ENCODE measurements at regions of chr22 and their contacts with region 1.

Region 1: DNA sequence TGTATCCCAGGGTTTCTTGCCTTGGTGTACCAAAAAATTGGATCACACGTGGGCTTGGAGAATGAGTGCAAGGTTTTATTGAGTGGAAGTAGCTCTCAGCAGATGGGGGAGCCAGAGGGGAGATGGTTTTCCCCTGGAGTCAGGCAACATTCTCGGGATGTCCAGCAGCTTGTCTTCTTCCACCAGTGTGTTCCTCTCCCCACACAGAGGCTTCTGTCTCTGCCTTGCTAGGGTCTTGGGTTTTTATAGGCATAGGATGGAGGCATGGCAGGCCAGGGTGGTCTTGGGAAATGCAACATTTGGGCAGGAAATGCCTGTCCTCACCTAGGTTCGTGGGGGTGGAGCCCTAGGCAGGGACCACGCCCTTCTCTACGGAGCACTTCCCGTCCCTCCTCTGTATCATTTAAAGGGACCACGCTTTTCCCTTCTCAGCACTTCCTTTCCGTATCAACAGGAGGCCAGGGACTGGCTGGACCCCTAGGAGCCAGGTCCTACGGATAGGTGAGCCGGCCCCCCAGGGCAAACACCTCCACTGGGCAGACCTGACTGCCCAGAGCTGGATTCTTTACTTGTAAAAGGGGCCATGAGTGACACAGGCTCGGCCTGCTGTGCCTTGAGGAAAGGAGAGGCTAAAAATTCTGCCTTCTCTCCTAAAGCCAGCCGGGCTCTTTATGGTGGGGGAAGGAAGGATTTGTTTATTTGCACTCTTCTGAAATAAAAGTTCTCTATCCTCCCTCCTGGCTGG is 55.3 kb upstream of the CCDC188 start:
- DNase-seq: peak; percentile 80
- ATAC-seq: peak; percentile 97
- H3K4me3 Mint-ChIP-seq: peak overlapping the region; percentile 82
- H3K27ac Mint-ChIP-seq: peak overlapping the region; percentile 89
- H3K4me1 Mint-ChIP-seq: peaks cover 26% of the 10 kb centered on the region
- H3K27me3 Mint-ChIP-seq: no peaks in the 10 kb centered on the region

Region 2: DNA sequence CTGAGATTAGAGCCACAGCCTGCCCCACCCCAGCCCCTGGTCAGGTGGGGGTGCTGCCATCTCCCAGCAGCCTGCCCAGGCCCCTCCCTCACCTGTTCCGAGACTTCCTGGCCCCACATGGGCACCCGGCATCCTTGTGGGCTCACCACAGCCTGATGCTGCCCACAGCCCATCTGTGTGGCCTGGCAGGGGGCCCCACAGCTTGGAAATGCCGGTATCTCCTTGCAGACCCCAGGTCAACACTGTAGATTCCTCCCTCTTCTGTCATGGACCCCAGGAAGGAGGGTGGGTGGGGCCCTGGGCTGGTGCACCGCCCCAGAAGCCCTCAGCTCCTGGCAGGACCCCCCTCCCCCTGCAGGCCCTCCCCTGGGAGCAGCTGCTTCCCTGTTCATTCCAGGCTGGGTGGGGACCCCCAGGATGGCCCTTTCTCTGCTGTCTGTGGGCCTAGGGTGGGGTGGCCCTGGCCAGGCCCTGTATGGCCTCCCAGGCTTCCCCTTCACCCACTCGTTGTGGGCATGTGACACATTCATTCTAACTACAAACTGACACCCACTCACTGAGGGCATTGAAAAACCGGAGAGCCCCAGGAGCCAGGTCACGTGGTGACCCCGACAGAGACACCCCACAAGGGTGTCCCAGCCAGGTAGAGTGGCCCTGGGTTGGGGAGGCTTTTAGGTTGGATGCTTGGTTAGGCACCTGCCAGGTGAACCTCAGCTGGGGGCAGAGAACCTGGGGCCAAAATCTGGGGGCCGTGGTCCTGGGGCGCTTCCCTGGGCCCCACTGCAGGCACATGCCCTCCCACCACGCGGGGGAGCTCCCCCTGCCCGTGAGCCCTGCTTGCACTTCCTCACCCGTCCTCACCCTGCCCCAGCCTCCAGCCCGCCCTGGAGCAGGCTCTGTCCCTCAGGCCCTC is 11.2 kb before region 1 on chr22:
- CTCF ChIA-PET with region 1: no interaction called
- POLR2A ChIA-PET with region 1: no interaction called
- intact Hi-C with region 1: no loop called
- DNase-seq: no peak
- ATAC-seq: no peak
- H3K4me3 Mint-ChIP-seq: no peak overlapping the region
- H3K27ac Mint-ChIP-seq: no peak overlapping the region
- H3K4me1 Mint-ChIP-seq: no peaks in the 10 kb centered on the region
- H3K27me3 Mint-ChIP-seq: no peaks in the 10 kb centered on the region

Region 3: DNA sequence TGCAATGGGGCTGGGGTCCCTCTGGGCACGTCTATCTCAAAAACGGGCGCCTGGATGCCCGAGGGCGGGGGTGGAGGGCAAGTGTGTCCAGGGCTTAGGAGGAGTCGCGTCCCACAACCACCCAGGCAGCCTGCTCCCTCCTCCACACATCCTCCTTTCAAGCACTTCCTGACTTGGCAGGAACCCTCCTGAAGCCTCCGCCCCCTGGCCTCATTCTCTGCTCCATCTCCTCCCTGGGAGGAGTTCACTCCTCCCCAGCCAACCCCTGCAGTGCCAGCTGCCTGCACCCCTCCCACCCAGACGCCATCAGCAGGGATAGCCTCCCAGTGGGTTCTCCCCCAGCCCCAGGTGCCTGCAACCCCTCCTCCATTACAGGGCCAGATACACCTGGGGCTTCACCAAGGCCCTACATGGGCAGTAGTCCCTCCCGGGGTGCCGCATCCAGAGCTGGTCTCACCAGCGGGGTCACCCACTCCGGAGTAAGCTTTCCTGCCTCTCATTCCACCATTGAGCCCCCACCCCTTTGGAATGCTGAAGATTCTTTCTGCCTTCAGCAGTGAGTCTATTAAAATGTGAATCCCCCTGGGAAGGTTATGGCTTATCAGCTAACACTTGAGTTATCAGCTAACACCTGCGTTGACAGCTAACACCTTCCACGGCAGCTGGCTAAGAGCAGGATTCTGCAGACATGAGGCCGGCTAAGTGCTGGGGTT is 37.6 kb after region 1 on chr22:
- CTCF ChIA-PET with region 1: interaction called, 4 read pairs
- POLR2A ChIA-PET with region 1: no interaction called
- intact Hi-C with region 1: loop called in 1 of 2 experiments (anchors 2 kb)
- DNase-seq: peak; percentile 77
- ATAC-seq: peak; percentile 81
- H3K4me3 Mint-ChIP-seq: peak overlapping the region; percentile 23
- H3K27ac Mint-ChIP-seq: peak overlapping the region; percentile 69
- H3K4me1 Mint-ChIP-seq: peaks cover 41% of the 10 kb centered on the region
- H3K27me3 Mint-ChIP-seq: no peaks in the 10 kb centered on the region

Region 4: GRCh38 chr22:20268279-20269012 is 62.3 kb after region 1 on chr22 and contains the start of gene RTN4R:
- CTCF ChIA-PET with region 1: no interaction called
- POLR2A ChIA-PET with region 1: no interaction called
- intact Hi-C with region 1: loop called in 1 of 2 experiments (anchors 1 kb)
- DNase-seq: peak; percentile 76
- ATAC-seq: peak; percentile 89
- H3K4me3 Mint-ChIP-seq: peak within 1 kb of the TSS; percentile 50
- H3K27ac Mint-ChIP-seq: no peak within 1 kb of the TSS
- H3K4me1 Mint-ChIP-seq: no peaks in the 10 kb centered on the region
- H3K27me3 Mint-ChIP-seq: peaks cover 4% of the 10 kb centered on the region
- total RNA-seq, gene RTN4R: 2.2 to 2.3 TPM

Region 5: GRCh38 chr22:20418211-20418788 is 212.2 kb after region 1 on chr22:
- CTCF ChIA-PET with region 1: no interaction called
- POLR2A ChIA-PET with region 1: no interaction called
- intact Hi-C with region 1: no loop called
- DNase-seq: peak; percentile 82
- ATAC-seq: peak; percentile 71
- H3K4me3 Mint-ChIP-seq: no peak overlapping the region
- H3K27ac Mint-ChIP-seq: no peak overlapping the region
- H3K4me1 Mint-ChIP-seq: no peaks in the 10 kb centered on the region
- H3K27me3 Mint-ChIP-seq: no peaks in the 10 kb centered on the region

Region 6: GRCh38 chr22:20777420-20778177 is 571.5 kb after region 1 on chr22:
- CTCF ChIA-PET with region 1: no interaction called
- POLR2A ChIA-PET with region 1: no interaction called
- intact Hi-C with region 1: no loop called
- DNase-seq: no peak
- ATAC-seq: no peak
- H3K4me3 Mint-ChIP-seq: no peak overlapping the region
- H3K27ac Mint-ChIP-seq: peak overlapping the region; percentile 20
- H3K4me1 Mint-ChIP-seq: peaks cover 13% of the 10 kb centered on the region
- H3K27me3 Mint-ChIP-seq: no peaks in the 10 kb centered on the region

Measured in activated CD4-positive, alpha-beta T cell treated with anti-CD3 and anti-CD28 coated beads for 36 hours (primary cell).